GM23248 (cell line): ENCODE measurements at regions of chr4 and their contacts with region 1.

Region 1: DNA sequence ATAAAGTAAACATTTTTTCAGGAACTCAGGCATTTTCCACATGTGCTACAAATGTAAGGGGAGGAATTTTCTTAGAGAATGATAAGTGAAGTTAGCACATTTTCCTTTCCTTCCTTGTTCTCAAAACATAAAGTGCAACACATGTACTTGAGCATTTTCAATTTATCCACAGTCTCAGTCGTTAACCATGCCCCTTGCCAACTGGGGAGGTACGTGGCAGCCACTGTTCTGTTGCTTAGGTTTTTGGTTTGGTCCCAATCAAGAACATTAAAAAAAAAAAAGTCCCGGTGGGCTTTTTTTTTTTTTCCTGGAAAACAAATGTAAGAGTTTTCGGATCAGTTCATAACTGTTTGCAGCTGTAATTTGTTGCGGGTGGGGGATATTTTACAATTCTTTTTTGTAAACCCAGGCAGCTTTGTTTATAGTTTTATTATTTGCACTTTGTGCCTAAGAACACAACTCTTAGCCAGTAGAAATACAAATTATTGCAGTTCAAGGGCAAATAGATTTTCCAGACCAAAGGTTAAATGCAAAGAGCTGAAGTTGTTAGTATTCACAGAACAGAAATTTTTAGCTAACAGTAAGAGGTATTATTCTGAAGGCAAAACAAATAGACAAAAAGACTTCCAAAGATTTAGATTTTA is 112.1 kb upstream of the NAP1L5 start:
- DNase-seq: peak; percentile 36
- H3K4me3 ChIP-seq: peak overlapping the region; percentile 12
- H3K27ac ChIP-seq: no peak overlapping the region
- H3K4me1 ChIP-seq: 0 out of 2 replicates have a peak, but pooled peaks cover 6% of the 10 kb centered on the region
- H3K27me3 ChIP-seq: no peaks in the 10 kb centered on the region

Region 2: DNA sequence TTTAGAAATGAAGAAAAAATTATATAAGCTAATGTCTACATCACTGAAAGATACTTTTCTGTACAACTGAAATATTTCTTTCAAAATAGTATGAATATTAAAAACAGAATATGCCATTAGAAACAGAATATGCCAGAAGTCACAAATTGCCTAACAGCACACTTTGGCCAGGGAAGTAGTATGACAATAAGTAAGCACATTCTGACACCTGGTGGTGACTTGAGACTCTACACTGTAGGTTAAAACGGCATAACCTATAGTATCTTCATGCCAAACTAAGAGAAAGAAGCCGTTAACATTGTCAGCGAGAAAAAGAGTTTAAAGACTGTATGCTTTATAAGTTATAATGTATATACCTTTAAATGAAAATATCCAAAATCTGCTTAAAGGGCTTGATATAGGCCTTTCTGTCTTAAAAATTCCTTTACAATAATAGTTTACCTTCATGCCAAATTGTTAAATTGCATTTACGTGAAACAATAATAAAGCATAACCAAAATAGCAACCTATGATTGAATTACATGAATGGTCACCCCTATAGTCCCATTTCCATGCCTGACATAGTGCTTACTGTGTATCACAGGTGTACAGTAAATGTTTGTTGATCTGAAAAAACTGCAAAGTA is 214.5 kb after region 1 on chr4:
- in situ Hi-C with region 1: loop called (anchors 5 kb)
- DNase-seq: peak; percentile 87
- H3K4me3 ChIP-seq: no peak overlapping the region
- H3K27ac ChIP-seq: no peak overlapping the region
- H3K4me1 ChIP-seq: no peaks in the 10 kb centered on the region
- H3K27me3 ChIP-seq: no peaks in the 10 kb centered on the region

Region 3: GRCh38 chr4:89134775-89135319 is 325.1 kb after region 1 on chr4:
- in situ Hi-C with region 1: no loop called
- DNase-seq: peak; percentile 90
- H3K4me3 ChIP-seq: 0 out of 2 replicates have a peak overlapping the region, but pooled peaks have one; percentile 9
- H3K27ac ChIP-seq: peak overlapping the region; percentile 60
- H3K4me1 ChIP-seq: peaks cover 17% of the 10 kb centered on the region
- H3K27me3 ChIP-seq: no peaks in the 10 kb centered on the region